Caco-2 (cell line): ENCODE measurements at regions of chr22 and their contacts with region 1.

Region 1: GRCh38 chr22:37498289-37498909 is 12.2 kb upstream of the MFNG start:
- DNase-seq: peak; percentile 67 to 87
- H3K4me3 ChIP-seq: no peak overlapping the region
- H3K4me3 Mint-ChIP-seq: no peak overlapping the region
- H3K27ac Mint-ChIP-seq: no peak overlapping the region
- H3K4me1 ChIP-seq: peaks cover 35% of the 10 kb centered on the region
- H3K4me1 Mint-ChIP-seq: peaks cover 33% of the 10 kb centered on the region
- H3K27me3 ChIP-seq: no peaks in the 10 kb centered on the region
- H3K27me3 Mint-ChIP-seq: no peaks in the 10 kb centered on the region
- CTCF ChIP-seq: peak; percentile 71 to 81

Region 2: DNA sequence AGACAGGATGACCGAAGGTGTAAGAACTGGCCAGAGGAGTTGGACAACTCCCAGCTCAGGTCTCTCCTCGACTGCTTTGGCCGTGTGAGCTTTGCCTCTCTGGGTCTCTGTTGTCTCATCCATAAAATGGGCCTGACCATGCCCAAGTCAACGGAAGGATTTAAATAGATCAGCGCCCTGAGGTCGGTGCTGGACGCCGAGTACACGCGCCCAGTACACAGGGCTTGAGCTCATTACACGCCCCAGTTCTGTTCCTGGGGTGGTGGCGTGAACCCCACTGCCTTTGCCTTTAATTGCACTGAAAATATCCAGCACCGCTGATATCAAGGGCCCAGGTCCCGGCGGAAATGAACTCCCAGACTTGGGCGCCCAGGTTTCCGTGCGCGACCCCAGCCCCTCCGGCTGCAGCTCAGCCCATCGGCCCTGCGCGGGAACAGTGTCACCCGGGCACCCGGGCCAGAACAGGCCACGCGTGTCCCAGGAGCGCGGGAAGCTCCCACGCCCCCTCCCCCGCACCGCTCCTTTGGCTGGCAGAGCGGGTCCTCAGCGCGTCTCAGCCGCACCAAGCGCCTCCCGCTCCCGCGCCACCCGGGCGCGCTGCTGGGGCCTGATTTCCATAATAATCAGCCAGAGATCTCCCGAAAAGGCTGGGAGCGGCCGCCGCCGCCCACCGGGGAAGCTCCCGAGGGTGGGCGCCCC is 173.9 kb before region 1 on chr22:
- CTCF ChIA-PET with region 1: no interaction called
- POLR2A ChIA-PET with region 1: no interaction called
- intact Hi-C with region 1: loop called (anchors 5 kb)
- DNase-seq: no peak
- H3K4me3 ChIP-seq: no peak overlapping the region
- H3K4me3 Mint-ChIP-seq: peak overlapping the region; percentile 63
- H3K27ac Mint-ChIP-seq: peak overlapping the region; percentile 77
- H3K4me1 ChIP-seq: peaks cover 93% of the 10 kb centered on the region
- H3K4me1 Mint-ChIP-seq: peaks cover 69% of the 10 kb centered on the region
- H3K27me3 ChIP-seq: no peaks in the 10 kb centered on the region
- H3K27me3 Mint-ChIP-seq: no peaks in the 10 kb centered on the region
- CTCF ChIP-seq: no peak

Region 3: GRCh38 chr22:37419969-37420685 is 78.3 kb before region 1 on chr22:
- CTCF ChIA-PET with region 1: no interaction called
- POLR2A ChIA-PET with region 1: no interaction called
- intact Hi-C with region 1: no loop called
- DNase-seq: peak; percentile 53 to 56
- H3K4me3 ChIP-seq: peak overlapping the region; percentile 46
- H3K4me3 Mint-ChIP-seq: peak overlapping the region; percentile 82
- H3K27ac Mint-ChIP-seq: peak overlapping the region; percentile 18
- H3K4me1 ChIP-seq: no peaks in the 10 kb centered on the region
- H3K4me1 Mint-ChIP-seq: no peaks in the 10 kb centered on the region
- H3K27me3 ChIP-seq: no peaks in the 10 kb centered on the region
- H3K27me3 Mint-ChIP-seq: no peaks in the 10 kb centered on the region
- CTCF ChIP-seq: no peak

Region 4: GRCh38 chr22:37472418-37473006 is 25.9 kb before region 1 on chr22:
- CTCF ChIA-PET with region 1: interaction called, 13 read pairs
- POLR2A ChIA-PET with region 1: no interaction called
- intact Hi-C with region 1: loop called (anchors 1 kb)
- DNase-seq: peak; percentile 61 to 69
- H3K4me3 ChIP-seq: no peak overlapping the region
- H3K4me3 Mint-ChIP-seq: no peak overlapping the region
- H3K27ac Mint-ChIP-seq: no peak overlapping the region
- H3K4me1 ChIP-seq: no peaks in the 10 kb centered on the region
- H3K4me1 Mint-ChIP-seq: no peaks in the 10 kb centered on the region
- H3K27me3 ChIP-seq: no peaks in the 10 kb centered on the region
- H3K27me3 Mint-ChIP-seq: no peaks in the 10 kb centered on the region
- CTCF ChIP-seq: peak; percentile 61 to 66

Region 5: DNA sequence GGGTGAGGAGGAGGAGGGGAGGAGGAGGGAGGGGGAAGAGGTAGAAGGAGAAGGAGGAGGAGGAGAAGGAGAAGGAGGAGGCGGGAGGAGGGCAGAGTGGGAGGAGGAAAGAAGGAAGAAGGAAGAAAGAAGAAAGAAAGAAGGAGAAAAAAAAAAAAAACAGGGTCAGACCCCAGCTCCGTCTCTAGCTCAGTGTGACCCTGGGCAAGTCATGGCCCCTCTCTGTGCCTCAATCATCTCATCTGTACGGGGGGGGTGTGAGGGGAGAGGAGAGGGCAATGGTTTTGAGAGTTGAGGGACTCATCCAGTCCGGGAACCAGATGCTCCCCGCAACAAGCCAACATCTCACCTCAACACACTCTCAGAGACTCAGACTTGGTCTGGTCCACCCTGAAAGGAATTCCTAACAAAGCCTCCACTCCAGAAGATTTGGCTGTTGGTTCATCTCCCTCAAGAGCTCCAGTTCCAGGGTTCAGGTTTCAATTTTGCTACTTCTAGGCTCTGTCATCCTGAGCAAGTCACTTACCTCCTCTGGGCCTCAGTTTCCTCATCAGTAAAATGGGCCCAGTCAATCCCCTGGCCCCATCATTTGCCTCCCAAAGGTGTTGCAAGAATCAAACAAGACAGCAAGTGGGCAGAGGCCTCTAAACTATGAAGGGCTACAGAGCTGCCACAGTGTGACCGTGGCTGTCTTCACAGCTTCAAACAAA is 13.2 kb after region 1 on chr22:
- CTCF ChIA-PET with region 1: interaction called, 10 read pairs
- POLR2A ChIA-PET with region 1: interaction called, 15 read pairs
- intact Hi-C with region 1: loop called (anchors 1 kb)
- DNase-seq: no peak
- H3K4me3 ChIP-seq: no peak overlapping the region
- H3K4me3 Mint-ChIP-seq: no peak overlapping the region
- H3K27ac Mint-ChIP-seq: peak overlapping the region; percentile 58
- H3K4me1 ChIP-seq: peaks cover 37% of the 10 kb centered on the region
- H3K4me1 Mint-ChIP-seq: peaks cover 24% of the 10 kb centered on the region
- H3K27me3 ChIP-seq: no peaks in the 10 kb centered on the region
- H3K27me3 Mint-ChIP-seq: no peaks in the 10 kb centered on the region
- CTCF ChIP-seq: no peak

Region 6: DNA sequence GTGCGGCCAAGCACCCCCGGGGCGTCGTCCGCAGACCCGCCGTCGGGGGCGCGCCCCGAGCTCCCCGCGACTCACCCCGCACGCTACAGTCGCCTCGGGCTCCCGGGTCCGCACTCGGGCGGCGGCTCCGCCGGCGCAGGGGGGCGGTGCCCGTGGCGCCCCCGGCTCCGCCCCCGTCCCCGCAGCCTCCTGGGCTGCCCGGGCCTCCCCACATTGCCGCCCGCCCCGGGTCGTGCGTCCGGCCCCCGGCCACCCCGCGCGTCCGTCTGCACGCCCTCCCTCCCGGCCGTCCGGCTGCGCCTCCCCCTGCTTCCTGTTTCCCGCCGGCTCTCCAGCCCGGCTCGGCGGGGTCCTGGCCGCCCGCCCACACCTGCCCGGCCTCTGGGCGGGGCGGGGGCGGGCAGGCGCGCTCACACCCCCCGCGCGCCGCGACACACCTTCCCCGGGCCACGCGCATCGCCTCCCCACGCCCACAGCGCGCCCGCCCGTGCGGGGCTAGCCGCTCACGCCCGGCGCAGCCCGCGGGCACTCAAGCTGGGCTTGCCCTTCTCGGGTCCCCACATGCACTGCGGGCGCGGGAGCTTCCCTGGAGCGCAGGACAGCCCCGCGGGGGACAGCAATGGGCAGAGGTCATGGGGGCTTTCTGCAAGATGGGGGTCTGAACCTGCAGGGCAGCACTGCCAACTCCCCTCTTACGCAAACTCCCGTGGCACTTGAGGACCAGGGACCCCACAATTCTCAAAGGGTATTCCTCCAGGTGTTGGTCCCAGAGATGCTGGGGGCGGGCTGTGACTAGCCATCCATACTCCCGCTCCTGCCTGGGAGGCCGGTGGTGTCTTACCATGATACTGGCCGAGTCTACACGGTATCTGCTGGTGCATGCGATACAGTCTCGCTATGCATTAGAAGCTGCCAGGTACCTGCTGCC is 21.1 kb after region 1 on chr22 and contains the start of gene CARD10:
- CTCF ChIA-PET with region 1: interaction called, 3 read pairs
- POLR2A ChIA-PET with region 1: interaction called, 5 read pairs
- intact Hi-C with region 1: loop called (anchors 2 kb)
- DNase-seq: peak in 1 of 2 experiments; percentile 63
- H3K4me3 ChIP-seq: peak within 1 kb of the TSS; percentile 63
- H3K4me3 Mint-ChIP-seq: peak within 1 kb of the TSS; percentile 86
- H3K27ac Mint-ChIP-seq: peak within 1 kb of the TSS; percentile 69
- H3K4me1 ChIP-seq: peaks cover 12% of the 10 kb centered on the region; the same call in 1 of the 2 replicates
- H3K4me1 Mint-ChIP-seq: peaks cover 14% of the 10 kb centered on the region
- H3K27me3 ChIP-seq: no peaks in the 10 kb centered on the region
- H3K27me3 Mint-ChIP-seq: no peaks in the 10 kb centered on the region
- CTCF ChIP-seq: no peak
- total RNA-seq, gene CARD10: 26.5 and 31.7 TPM in 2 replicates